A549 (cell line): ENCODE measurements at regions of chr9 and their contacts with region 1.

Region 1: GRCh38 chr9:96333967-96334366 is 32.0 kb upstream of the HSD17B3 start:
- DNase-seq: no peak
- ATAC-seq: no peak
- H3K4me3 ChIP-seq: no peak overlapping the region
- H3K27ac ChIP-seq: peak overlapping the region in 1 of 2 experiments; percentile 64; a peak in 3 of 6 replicates
- H3K4me1 ChIP-seq: peaks cover 25% of the 10 kb centered on the region
- CTCF ChIP-seq: no peak
- EP300 ChIP-seq: no peak
- POLR2A ChIP-seq: no peak
- RAD21 ChIP-seq: no peak

Region 2: GRCh38 chr9:96317335-96317980 is 16.5 kb before region 1 on chr9:
- CTCF ChIA-PET with region 1: interaction called, 13 read pairs
- POLR2A ChIA-PET with region 1: no interaction called
- DNase-seq: peak; percentile 60 to 69
- ATAC-seq: peak; percentile 50 to 89; a peak in 4 of 6 replicates
- H3K4me3 ChIP-seq: no peak overlapping the region
- H3K27ac ChIP-seq: no peak overlapping the region
- H3K4me1 ChIP-seq: no peaks in the 10 kb centered on the region; the same call in 2 of the 3 replicates
- CTCF ChIP-seq: peak; percentile 87
- EP300 ChIP-seq: no peak
- POLR2A ChIP-seq: no peak
- RAD21 ChIP-seq: peak; percentile 83 to 84